Activated CD8-positive, alpha-beta T cell treated with anti-CD3 and anti-CD28 coated beads for 36 hours (primary cell): ENCODE measurements at regions of chr12 and their contacts with region 1.

Region 1: DNA sequence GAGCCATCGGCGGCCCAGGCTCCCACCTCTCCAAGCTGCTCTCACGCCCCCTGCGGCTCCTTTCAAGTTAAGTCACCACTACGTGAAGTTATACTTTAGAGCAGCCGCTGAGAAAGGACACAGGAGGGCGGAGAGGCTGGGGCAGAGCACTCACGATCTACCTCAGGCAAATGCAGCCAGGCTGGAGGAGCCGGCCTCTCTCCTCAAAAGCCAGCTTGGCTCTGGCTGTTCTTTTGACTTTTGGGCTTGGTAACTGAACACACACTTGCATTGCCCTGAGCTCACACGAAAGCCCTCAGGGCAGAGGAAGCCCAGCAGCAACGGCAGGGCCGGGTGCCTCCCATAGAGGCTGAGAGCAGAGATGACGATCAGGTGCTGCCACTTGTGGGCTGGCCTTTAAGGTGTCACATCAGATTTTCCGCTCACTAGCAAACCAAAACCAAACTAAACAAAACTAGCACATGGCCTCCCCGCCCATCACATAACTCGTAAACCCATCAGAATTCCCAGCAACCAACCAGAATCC is 75.2 kb downstream of the PITPNM2 start:
- DNase-seq: peak; percentile 91
- ATAC-seq: peak; percentile 79
- H3K4me3 Mint-ChIP-seq: peak overlapping the region; percentile 77
- H3K27ac Mint-ChIP-seq: peak overlapping the region; percentile 93
- H3K4me1 Mint-ChIP-seq: peaks cover 66% of the 10 kb centered on the region
- H3K27me3 Mint-ChIP-seq: no peaks in the 10 kb centered on the region
- CTCF ChIP-seq: no peak

Region 2: GRCh38 chr12:122785503-122785902 is 290.2 kb before region 1 on chr12:
- CTCF ChIA-PET with region 1: no interaction called
- POLR2A ChIA-PET with region 1: no interaction called
- intact Hi-C with region 1: no loop called
- DNase-seq: no peak
- ATAC-seq: no peak
- H3K4me3 Mint-ChIP-seq: no peak overlapping the region
- H3K27ac Mint-ChIP-seq: no peak overlapping the region
- H3K4me1 Mint-ChIP-seq: no peaks in the 10 kb centered on the region
- H3K27me3 Mint-ChIP-seq: no peaks in the 10 kb centered on the region
- CTCF ChIP-seq: no peak

Region 3: DNA sequence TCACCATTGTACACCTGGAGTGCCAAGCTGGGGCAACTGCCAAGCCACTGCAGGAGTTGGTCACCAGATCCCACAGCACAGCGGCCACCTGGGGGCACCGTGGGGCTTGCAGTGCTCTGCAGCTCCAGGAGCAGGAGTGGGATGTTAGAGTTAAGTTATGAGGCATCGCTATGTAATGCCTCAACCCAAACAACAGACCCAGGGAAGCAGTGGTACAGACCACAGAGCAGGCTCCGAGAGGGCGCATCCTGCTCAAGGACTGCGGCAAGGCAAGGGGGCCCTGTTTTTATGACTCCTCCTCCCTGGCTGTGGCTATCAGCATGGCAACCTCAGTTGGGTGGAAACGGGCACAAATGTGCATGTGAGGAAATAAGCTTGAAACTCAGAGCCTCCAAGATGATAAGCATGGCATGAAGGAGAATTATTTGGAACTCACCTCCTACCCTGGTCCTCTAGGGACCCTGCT is 32.1 kb before region 1 on chr12:
- CTCF ChIA-PET with region 1: interaction called, 33 read pairs
- POLR2A ChIA-PET with region 1: interaction called, 28 read pairs
- intact Hi-C with region 1: no loop called
- DNase-seq: peak; percentile 91
- ATAC-seq: peak; percentile 98
- H3K4me3 Mint-ChIP-seq: no peak overlapping the region
- H3K27ac Mint-ChIP-seq: peak overlapping the region; percentile 79
- H3K4me1 Mint-ChIP-seq: peaks cover 29% of the 10 kb centered on the region
- H3K27me3 Mint-ChIP-seq: no peaks in the 10 kb centered on the region
- CTCF ChIP-seq: peak; percentile 68

Region 4: GRCh38 chr12:123089631-123090353 is 14.1 kb after region 1 on chr12:
- CTCF ChIA-PET with region 1: interaction called, 12 read pairs
- POLR2A ChIA-PET with region 1: interaction called, 13 read pairs
- intact Hi-C with region 1: no loop called
- DNase-seq: peak; percentile 38
- ATAC-seq: peak; percentile 72
- H3K4me3 Mint-ChIP-seq: no peak overlapping the region
- H3K27ac Mint-ChIP-seq: no peak overlapping the region
- H3K4me1 Mint-ChIP-seq: peaks cover 20% of the 10 kb centered on the region
- H3K27me3 Mint-ChIP-seq: no peaks in the 10 kb centered on the region
- CTCF ChIP-seq: no peak

Region 5: DNA sequence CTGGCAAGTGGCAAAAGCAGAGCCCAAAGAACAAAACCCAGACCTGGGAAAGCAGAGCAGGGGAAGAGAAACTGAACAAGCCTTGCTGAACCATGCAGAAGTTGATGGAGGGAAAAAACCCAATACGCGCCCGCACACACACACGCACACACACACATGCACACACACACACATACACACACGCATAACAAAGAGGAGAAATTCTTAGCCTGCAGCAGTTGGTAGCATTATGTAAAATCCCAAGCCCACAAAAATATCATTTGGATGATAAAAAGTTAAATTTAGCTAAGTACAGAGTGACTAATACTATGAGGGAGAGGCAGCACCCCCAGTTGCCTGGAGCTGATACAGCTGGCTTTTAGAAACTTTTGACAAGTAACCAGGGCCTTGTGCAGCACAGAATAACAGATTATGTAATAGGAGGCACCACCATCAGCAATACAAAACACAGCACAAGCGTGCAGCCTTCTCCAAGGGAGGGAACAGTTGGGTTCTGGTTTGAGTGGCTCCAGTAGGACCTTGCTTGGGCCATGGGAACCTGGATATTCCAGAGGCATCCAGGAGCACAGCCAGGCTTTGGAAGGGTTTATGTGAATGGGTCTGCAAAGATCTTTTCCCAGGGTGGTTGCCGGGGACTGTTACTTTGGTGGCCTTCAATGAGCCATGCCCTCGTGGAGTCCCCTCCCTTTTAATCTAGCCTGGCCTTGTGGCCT is 39.9 kb after region 1 on chr12:
- CTCF ChIA-PET with region 1: interaction called, 7 read pairs
- POLR2A ChIA-PET with region 1: interaction called, 14 read pairs
- intact Hi-C with region 1: no loop called
- DNase-seq: peak; percentile 46
- ATAC-seq: no peak
- H3K4me3 Mint-ChIP-seq: no peak overlapping the region
- H3K27ac Mint-ChIP-seq: peak overlapping the region; percentile 48
- H3K4me1 Mint-ChIP-seq: peaks cover 66% of the 10 kb centered on the region
- H3K27me3 Mint-ChIP-seq: no peaks in the 10 kb centered on the region
- CTCF ChIP-seq: no peak

Region 6: DNA sequence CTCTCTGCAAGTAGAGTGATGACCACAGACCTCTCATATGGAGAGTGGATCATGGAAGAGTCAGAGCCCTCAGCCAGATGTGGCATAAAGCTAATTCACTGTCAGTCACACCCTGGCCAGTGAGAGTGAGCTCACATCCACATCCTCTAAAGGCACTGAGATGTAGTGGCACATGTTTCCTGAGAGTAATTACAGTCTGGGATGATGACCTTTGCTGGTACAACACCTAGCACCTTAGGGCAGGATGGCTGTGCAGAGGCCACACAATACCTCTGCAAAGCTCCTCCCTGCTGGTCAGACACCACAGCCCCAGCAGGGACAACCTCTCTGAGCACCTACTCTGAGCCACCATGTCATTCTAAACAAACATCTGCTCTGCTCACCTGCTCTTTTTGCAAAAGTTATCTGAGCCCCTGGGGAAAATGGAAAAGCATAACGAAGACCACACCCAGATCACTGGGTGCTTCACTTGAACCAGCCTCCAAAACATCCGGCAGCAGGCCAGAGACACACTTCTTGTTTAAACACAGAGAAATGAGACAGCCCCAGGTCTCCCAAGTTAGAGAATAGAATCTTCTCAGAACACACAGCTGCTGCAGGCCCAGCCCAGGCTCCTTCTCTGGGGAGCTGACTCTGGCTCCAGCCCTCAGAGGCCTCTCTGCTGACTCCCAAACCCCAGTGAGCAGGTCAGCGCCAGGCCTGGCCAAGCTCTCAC is 44.9 kb after region 1 on chr12:
- CTCF ChIA-PET with region 1: interaction called, 7 read pairs
- POLR2A ChIA-PET with region 1: interaction called, 14 read pairs
- intact Hi-C with region 1: no loop called
- DNase-seq: peak; percentile 68
- ATAC-seq: peak; percentile 83
- H3K4me3 Mint-ChIP-seq: peak overlapping the region; percentile 2
- H3K27ac Mint-ChIP-seq: peak overlapping the region; percentile 84
- H3K4me1 Mint-ChIP-seq: peaks cover 63% of the 10 kb centered on the region
- H3K27me3 Mint-ChIP-seq: no peaks in the 10 kb centered on the region
- CTCF ChIP-seq: no peak

Region 7: DNA sequence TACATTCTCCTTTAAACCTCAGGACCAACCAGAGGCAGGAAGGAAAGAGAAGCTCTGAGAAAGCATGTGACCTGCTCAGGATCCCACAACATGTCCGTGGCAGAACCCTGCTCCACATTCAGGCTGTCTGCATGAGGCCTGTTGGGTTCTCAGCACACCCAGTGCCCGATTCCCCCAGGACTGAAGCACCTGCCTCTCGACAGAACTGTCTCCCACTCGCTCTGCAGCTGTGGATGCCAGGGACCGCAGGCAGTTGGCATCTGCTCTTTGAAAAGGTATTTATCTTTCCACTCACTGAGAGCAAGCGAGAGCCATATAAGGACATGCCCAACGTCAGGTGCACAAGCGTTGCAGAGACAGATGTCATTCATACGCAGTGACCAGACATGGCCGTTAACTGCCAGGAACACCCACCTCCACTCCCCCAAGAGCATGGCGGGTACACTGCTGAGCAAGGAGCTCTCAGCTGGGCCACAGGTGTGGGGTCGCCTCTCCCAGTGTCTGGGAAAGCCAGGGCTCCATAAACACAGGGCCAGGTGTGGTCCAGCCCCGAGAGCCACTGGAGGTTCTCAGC is 56.3 kb after region 1 on chr12:
- CTCF ChIA-PET with region 1: interaction called, 3 read pairs
- POLR2A ChIA-PET with region 1: interaction called, 6 read pairs
- intact Hi-C with region 1: loop called (anchors 5 kb)
- DNase-seq: peak; percentile 71
- ATAC-seq: peak; percentile 95
- H3K4me3 Mint-ChIP-seq: peak overlapping the region; percentile 52
- H3K27ac Mint-ChIP-seq: peak overlapping the region; percentile 86
- H3K4me1 Mint-ChIP-seq: peaks cover 38% of the 10 kb centered on the region
- H3K27me3 Mint-ChIP-seq: no peaks in the 10 kb centered on the region
- CTCF ChIP-seq: no peak

Region 8: GRCh38 chr12:123150744-123151456 is 75.2 kb after region 1 on chr12 and contains the start of gene PITPNM2:
- CTCF ChIA-PET with region 1: interaction called, 6 read pairs
- POLR2A ChIA-PET with region 1: interaction called, 23 read pairs
- intact Hi-C with region 1: no loop called
- DNase-seq: peak; percentile 64
- ATAC-seq: peak; percentile 82
- H3K4me3 Mint-ChIP-seq: peak within 1 kb of the TSS; percentile 76
- H3K27ac Mint-ChIP-seq: peak within 1 kb of the TSS; percentile 87
- H3K4me1 Mint-ChIP-seq: peaks cover 30% of the 10 kb centered on the region
- H3K27me3 Mint-ChIP-seq: no peaks in the 10 kb centered on the region
- CTCF ChIP-seq: no peak
- total RNA-seq, gene PITPNM2: 15.3 to 17.9 TPM

Region 9: GRCh38 chr12:123163227-123163626 is 87.5 kb after region 1 on chr12:
- CTCF ChIA-PET with region 1: no interaction called
- POLR2A ChIA-PET with region 1: no interaction called
- intact Hi-C with region 1: no loop called
- DNase-seq: no peak
- ATAC-seq: no peak
- H3K4me3 Mint-ChIP-seq: no peak overlapping the region
- H3K27ac Mint-ChIP-seq: no peak overlapping the region
- H3K4me1 Mint-ChIP-seq: peaks cover 4% of the 10 kb centered on the region
- H3K27me3 Mint-ChIP-seq: no peaks in the 10 kb centered on the region
- CTCF ChIP-seq: no peak

Region 10: GRCh38 chr12:123187637-123188036 is 111.9 kb after region 1 on chr12:
- CTCF ChIA-PET with region 1: no interaction called
- POLR2A ChIA-PET with region 1: no interaction called
- intact Hi-C with region 1: no loop called
- DNase-seq: no peak
- ATAC-seq: no peak
- H3K4me3 Mint-ChIP-seq: no peak overlapping the region
- H3K27ac Mint-ChIP-seq: no peak overlapping the region
- H3K4me1 Mint-ChIP-seq: no peaks in the 10 kb centered on the region
- H3K27me3 Mint-ChIP-seq: no peaks in the 10 kb centered on the region
- CTCF ChIP-seq: no peak